Activated CD8-positive, alpha-beta T cell treated with anti-CD3 and anti-CD28 coated beads for 36 hours (primary cell): ENCODE measurements at regions of chr14 and their contacts with region 1.

Region 1: DNA sequence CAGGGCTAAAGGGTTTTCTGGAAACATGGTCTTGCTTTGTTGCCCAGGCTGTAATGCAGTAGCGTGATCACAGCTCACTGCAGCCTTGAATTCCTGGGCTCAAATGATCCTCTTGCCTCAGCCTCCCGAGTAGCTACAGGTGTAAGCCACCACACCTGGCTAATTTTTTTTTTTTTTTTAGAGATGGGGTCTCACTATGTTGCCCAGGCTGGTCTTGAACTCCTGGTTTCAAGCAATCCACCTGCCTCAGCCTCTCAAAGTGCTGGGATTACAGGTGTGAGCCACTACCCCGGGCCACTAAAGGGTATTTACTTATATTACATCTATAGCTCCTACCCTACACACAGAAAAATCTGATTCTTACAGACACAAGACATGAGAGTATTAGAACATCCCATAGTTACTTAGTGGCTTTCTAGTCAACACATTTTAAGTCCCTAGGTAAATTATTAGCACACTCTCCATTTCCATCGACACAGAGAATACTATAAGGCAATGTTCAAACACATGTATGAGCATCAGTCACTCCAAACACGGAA is 6.2 kb upstream of the DCAF11 start:
- DNase-seq: no peak
- ATAC-seq: peak; percentile 31
- H3K4me3 Mint-ChIP-seq: peak overlapping the region; percentile 60
- H3K27ac Mint-ChIP-seq: peak overlapping the region; percentile 99
- H3K4me1 Mint-ChIP-seq: peaks cover 20% of the 10 kb centered on the region
- H3K27me3 Mint-ChIP-seq: no peaks in the 10 kb centered on the region
- CTCF ChIP-seq: no peak

Region 2: DNA sequence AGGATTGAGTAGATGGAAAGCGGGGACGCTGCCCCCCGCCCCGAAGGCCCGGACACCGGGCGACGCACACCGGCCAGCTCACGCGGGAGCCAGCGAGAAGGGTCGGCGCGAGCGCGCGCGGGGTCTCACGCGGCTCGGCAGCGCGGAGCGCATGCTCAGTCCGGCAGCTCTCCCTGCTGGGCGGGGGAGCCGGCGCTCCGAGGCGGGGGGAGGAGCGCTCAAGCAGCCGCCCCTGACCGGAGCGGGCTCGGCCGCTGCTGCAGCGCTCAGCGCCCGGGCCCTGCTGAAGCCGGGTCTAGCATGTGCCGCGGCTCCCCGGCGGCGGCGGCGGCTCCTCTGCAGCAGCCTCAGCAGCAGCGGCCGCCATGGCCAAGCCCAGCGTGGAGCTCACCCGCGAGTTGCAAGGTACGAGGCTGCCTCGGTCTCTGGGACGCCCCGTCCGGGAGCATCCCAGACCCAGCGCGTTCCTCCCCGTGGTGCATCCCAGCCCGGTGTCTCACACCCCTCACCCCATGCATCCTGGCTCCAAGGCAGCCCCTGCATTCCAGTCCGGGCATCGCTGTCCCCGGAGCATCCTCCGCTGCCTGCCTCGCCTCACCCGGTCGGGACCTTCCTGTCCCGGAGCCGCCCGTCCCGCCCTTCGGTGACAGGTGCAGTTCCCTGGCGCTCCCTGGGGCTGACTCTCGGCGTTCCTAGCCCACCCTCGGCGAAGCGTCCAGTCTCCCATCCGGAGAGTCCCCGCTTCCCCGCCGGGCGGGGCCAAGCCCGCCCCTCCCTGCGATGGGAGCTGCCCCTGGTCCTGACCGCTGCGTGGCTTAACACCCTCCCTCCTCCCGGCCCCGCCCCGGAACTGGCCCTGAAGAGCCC is 56.4 kb before region 1 on chr14 and contains the start of gene CARMIL3:
- CTCF ChIA-PET with region 1: interaction called, 199 read pairs
- POLR2A ChIA-PET with region 1: interaction called, 18 read pairs
- intact Hi-C with region 1: loop called (anchors 2 kb)
- DNase-seq: peak; percentile 65
- ATAC-seq: peak; percentile 60
- H3K4me3 Mint-ChIP-seq: peak within 1 kb of the TSS; percentile 67
- H3K27ac Mint-ChIP-seq: peak within 1 kb of the TSS; percentile 10
- H3K4me1 Mint-ChIP-seq: peaks cover 19% of the 10 kb centered on the region
- H3K27me3 Mint-ChIP-seq: peaks cover 5% of the 10 kb centered on the region
- CTCF ChIP-seq: no peak
- total RNA-seq, gene CARMIL3: 0.63 to 0.83 TPM

Region 3: DNA sequence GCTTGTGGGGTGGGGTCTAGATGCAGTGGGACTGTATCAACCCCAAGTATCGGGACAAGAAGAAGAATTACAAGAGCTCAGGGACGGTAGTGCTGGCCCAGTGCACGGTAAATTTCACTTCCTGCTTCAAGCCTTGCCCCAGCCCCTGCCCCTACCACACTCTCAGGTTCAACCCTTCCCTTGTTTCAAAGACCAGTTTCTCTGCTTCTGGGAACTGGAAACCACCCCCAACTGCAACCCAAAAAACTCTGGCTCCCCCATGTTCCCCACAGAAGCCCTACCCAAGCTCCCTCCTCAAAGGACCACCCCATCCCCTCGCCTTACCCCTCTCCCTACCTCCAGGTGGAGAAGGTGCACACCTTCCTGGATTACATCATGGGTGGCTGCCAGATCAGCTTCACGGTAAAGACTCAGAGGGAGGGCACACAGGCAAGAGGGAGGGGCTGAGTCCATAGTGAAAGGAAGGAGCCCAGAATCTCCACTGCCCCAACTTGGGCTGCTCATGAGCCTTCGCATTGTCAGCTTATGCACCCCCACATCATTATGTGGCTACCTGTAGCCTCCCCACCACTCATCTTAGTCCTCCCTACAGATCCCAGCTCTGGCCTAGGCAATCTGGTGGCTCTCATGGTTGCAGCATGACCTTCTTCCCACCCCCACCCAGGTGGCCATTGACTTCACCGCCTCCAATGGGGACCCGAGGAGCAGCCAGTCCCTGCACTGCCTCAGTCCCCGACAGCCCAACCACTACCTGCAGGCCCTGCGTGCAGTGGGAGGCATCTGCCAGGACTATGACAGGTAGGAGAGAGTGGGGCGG is 32.7 kb before region 1 on chr14:
- CTCF ChIA-PET with region 1: interaction called, 34 read pairs
- POLR2A ChIA-PET with region 1: interaction called, 19 read pairs
- intact Hi-C with region 1: no loop called
- DNase-seq: no peak
- ATAC-seq: no peak
- H3K4me3 Mint-ChIP-seq: no peak overlapping the region
- H3K27ac Mint-ChIP-seq: peak overlapping the region; percentile 55
- H3K4me1 Mint-ChIP-seq: peaks cover 18% of the 10 kb centered on the region
- H3K27me3 Mint-ChIP-seq: no peaks in the 10 kb centered on the region
- CTCF ChIP-seq: no peak

Region 4: GRCh38 chr14:24135834-24136542 is 27.6 kb after region 1 on chr14 and contains the start of gene PSME1:
- CTCF ChIA-PET with region 1: interaction called, 22 read pairs
- POLR2A ChIA-PET with region 1: interaction called, 53 read pairs
- intact Hi-C with region 1: no loop called
- DNase-seq: peak; percentile 96
- ATAC-seq: peak; percentile 97
- H3K4me3 Mint-ChIP-seq: peak within 1 kb of the TSS; percentile 97
- H3K27ac Mint-ChIP-seq: peak within 1 kb of the TSS; percentile 92
- H3K4me1 Mint-ChIP-seq: peaks cover 56% of the 10 kb centered on the region
- H3K27me3 Mint-ChIP-seq: no peaks in the 10 kb centered on the region
- CTCF ChIP-seq: no peak
- total RNA-seq, gene PSME1: 451 to 460 TPM

Region 5: DNA sequence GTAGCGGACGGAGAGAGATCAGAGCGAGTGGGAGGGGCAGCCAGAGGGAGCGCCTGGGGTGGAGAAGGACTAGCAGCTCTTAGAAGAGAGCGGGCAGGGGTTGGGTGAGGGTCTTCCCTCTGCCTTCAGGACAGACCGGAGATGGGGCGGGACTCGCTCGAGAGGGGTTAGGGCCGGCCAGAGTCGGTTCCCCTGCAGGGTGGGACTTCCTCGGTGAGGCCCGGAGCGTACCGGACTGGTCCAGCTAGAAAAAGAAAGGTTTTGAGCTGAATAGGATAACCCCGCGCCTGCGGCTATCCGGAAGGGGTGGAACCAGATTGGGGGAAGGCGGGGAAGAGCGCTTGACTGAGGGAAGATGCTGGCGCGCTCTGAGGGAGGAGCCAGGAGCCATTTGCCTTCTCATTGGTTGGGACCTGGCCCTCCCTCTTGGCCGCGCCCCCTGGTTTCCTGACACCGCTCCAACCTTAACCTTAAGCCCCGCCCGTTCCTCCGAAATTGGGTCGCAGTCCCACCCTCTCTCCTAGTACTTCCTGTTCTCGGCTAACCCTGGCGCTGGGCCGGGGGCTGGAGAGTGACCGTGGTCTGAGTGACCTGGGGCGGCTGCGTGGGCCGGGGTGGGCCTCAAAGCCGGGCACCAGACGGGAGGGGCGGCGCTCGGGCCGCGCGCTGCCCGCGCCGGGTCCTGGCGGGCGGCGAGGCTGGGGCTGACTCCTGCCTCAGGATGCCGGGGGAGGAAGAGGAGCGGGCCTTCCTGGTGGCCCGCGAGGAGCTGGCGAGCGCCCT is 38.8 kb after region 1 on chr14 and contains the start of gene RNF31:
- CTCF ChIA-PET with region 1: interaction called, 17 read pairs
- POLR2A ChIA-PET with region 1: interaction called, 62 read pairs
- intact Hi-C with region 1: no loop called
- DNase-seq: peak; percentile 100
- ATAC-seq: peak; percentile 87
- H3K4me3 Mint-ChIP-seq: peak within 1 kb of the TSS; percentile 89
- H3K27ac Mint-ChIP-seq: peak within 1 kb of the TSS; percentile 98
- H3K4me1 Mint-ChIP-seq: peaks cover 58% of the 10 kb centered on the region
- H3K27me3 Mint-ChIP-seq: no peaks in the 10 kb centered on the region
- CTCF ChIP-seq: no peak
- total RNA-seq, gene RNF31: 71.6 to 75.0 TPM